Calu3 (cell line): ENCODE measurements at regions of chr5 and their contacts with region 1.

Region 1: GRCh38 chr5:145237843-145238242 is 597.3 kb downstream of the PRELID2 start:
- DNase-seq: peak; percentile 75
- H3K4me3 Mint-ChIP-seq: no peak overlapping the region
- H3K27ac Mint-ChIP-seq: no peak overlapping the region
- H3K4me1 Mint-ChIP-seq: peaks cover 20% of the 10 kb centered on the region
- H3K27me3 Mint-ChIP-seq: no peaks in the 10 kb centered on the region
- CTCF ChIP-seq: peak; percentile 71

Region 2: GRCh38 chr5:144467792-144468191 is 770.1 kb before region 1 on chr5:
- CTCF ChIA-PET with region 1: interaction called, 5 read pairs
- intact Hi-C with region 1: loop called (anchors 5 kb)
- DNase-seq: peak; percentile 44
- H3K4me3 Mint-ChIP-seq: no peak overlapping the region
- H3K27ac Mint-ChIP-seq: no peak overlapping the region
- H3K4me1 Mint-ChIP-seq: peaks cover 9% of the 10 kb centered on the region
- H3K27me3 Mint-ChIP-seq: peaks cover 17% of the 10 kb centered on the region
- CTCF ChIP-seq: no peak

Region 3: DNA sequence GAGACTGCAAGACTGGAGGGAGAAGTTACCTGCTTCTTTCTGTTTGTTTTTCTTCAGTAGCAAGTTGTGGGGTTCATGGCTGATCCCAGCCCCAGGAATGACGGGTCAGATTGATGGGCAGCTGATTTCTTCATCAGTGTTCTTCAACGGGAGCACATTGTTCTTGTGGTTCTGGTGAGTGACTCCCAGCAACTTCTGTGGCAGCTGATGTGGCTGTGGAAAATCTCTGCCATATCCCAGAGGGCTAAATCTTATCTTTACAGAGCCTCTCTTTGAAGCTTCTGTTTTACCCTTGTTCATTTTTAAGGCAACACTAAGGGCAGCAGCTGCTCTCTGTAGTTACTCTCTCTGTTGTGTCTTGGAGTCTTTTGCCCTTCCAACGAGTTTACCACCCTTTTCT is 113.0 kb before region 1 on chr5:
- CTCF ChIA-PET with region 1: interaction called, 3 read pairs
- intact Hi-C with region 1: loop called (anchors 5 kb)
- DNase-seq: no peak
- H3K4me3 Mint-ChIP-seq: no peak overlapping the region
- H3K27ac Mint-ChIP-seq: no peak overlapping the region
- H3K4me1 Mint-ChIP-seq: no peaks in the 10 kb centered on the region
- H3K27me3 Mint-ChIP-seq: no peaks in the 10 kb centered on the region
- CTCF ChIP-seq: no peak